Activated CD4-positive, alpha-beta T cell treated with anti-CD3 and anti-CD28 coated beads, Interleukin-2, amount 10 ng/mL, durations not matched to agents 24 days and 14 days (primary cell): ENCODE measurements at regions of chr6 and their contacts with region 1.

Region 1: DNA sequence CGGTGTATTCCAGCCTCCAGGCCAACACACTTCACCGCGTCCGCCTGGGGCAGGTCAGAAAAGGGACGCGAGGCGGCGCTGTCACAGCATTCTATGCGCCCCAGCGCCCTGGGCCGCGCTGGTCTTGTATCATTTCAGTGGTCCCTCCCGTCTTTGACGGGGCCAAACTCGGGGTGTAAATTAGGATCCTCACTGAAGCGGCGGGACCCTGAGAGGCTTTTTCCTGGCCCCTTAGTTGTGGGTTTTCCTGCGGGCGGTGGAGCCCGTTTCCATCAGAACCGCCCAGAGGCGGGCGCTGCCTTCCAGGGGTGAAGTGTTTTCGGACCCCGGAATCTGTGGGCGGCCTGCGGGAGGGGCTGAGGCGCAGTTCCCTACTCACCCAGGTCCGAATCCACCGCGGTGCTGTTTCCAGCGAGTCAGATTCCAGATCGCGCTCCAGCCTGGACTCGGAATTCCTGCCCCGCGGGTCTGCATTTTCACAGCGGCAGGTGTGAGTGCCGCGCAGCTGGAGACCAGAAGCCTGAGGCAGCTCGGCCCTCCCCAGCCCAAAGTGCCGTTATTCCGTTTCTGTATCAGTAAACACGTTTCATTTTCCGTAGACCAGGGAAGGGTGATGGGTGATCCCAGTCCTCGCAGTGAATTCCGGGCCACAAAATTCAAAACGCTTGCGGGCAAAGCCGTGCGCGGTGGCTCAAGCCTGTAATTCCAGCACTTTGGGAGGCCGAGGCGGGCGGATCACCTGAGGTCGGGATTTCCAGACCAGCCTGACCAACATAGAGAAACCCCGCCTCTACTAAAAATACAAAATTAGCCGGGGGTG is 3.9 kb upstream of the MICB start:
- DNase-seq: peak; percentile 93
- H3K4me3 Mint-ChIP-seq: peak overlapping the region; percentile 93
- H3K27ac Mint-ChIP-seq: peak overlapping the region; percentile 97
- H3K4me1 Mint-ChIP-seq: peaks cover 39% of the 10 kb centered on the region
- H3K27me3 Mint-ChIP-seq: no peaks in the 10 kb centered on the region

Region 2: DNA sequence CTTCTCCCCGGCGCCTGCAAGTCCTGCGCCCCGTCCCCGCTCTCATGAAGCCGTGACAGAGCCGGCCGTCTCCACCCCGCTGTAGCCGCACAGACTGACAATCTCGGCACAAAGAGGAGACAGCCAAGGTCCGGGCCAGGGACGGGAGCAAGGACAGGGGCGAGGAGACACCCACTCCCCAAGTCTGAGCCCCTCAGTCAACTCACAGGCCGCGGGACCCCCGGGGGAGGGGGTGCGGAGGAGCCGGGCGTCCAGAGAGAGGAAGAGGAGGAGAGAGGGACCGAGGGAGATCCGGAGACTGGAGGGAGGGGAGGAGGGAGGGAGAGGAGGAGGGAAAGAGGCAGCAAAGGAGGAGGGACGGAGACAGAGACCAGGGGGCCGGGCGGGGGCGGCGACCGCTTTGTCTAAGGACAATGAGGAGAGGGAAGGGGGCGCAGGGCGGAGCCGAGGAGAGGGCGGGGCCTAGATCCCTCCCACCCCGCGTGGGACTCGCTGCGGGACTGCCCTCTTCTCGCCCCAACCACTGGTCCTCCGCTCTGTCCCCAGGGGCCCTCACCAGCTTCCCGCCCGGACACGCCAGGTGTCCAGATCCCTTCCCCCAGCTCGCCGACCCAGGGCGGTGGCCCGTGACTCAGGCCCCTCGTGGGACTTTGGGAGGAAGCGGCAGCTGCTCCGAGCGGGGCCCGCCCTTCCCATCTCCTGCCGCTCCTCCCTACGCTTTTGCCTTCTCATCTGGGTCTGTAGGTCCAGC is 807.0 kb before region 1 on chr6:
- intact Hi-C with region 1: loop called (anchors 10 kb)
- DNase-seq: peak; percentile 96
- H3K4me3 Mint-ChIP-seq: peak overlapping the region; percentile 94
- H3K27ac Mint-ChIP-seq: peak overlapping the region; percentile 93
- H3K4me1 Mint-ChIP-seq: peaks cover 53% of the 10 kb centered on the region
- H3K27me3 Mint-ChIP-seq: no peaks in the 10 kb centered on the region

Region 3: GRCh38 chr6:31403283-31403989 is 90.6 kb before region 1 on chr6 and contains the start of gene MICA:
- intact Hi-C with region 1: loop called (anchors 5 kb)
- DNase-seq: peak; percentile 93
- H3K4me3 Mint-ChIP-seq: peak within 1 kb of the TSS; percentile 86
- H3K27ac Mint-ChIP-seq: peak within 1 kb of the TSS; percentile 69
- H3K4me1 Mint-ChIP-seq: peaks cover 59% of the 10 kb centered on the region
- H3K27me3 Mint-ChIP-seq: peaks cover 2% of the 10 kb centered on the region
- total RNA-seq, gene MICA: 6.5 and 7.3 TPM in 2 replicates

Region 4: DNA sequence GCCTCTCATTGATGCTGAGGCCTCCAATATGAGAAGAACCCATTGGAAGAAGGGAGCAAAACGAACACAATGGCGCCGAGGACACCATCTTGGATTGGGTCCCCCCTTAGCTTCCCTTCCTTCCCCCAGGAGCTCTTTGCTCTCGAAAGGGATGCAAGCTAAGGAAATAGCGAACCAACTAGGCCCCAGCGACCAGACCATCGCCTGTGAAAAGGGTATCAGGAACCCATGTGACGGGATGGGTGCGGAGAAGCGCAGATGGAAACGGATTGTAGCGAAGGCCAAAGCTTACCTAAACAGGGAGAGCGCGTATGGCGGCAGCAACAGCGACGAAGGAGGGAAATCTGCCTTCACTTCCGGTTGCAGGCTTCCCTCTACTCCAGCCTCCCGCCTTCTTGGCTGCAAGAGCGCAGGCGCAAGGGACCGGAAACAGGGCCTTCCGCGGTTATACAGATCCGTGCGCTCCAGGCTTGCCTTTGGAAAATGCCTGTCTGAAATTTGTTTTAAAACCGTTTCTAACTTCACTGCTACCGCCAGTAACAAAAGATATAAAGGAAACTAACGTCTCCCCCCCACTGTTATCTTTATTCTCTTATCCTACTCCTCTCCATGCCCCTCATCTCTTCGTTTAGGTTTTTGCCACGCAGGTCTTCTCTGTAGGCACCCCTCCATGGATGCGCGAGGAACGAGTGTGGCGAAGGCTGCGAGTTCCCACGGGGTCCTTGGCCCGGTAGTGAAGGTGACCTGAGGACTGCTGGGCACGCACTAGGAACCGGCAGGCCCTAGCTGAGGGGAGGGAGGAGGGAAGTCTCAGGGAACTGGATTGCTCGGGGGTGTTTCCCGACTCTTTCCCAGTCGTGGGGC is 47.8 kb after region 1 on chr6 and contains the start of gene DDX39B:
- intact Hi-C with region 1: loop called (anchors 1 kb)
- DNase-seq: peak; percentile 98
- H3K4me3 Mint-ChIP-seq: peak within 1 kb of the TSS; percentile 81
- H3K27ac Mint-ChIP-seq: peak within 1 kb of the TSS; percentile 90
- H3K4me1 Mint-ChIP-seq: peaks cover 50% of the 10 kb centered on the region
- H3K27me3 Mint-ChIP-seq: no peaks in the 10 kb centered on the region
- total RNA-seq, gene DDX39B: 696 and 720 TPM in 2 replicates

Region 5: DNA sequence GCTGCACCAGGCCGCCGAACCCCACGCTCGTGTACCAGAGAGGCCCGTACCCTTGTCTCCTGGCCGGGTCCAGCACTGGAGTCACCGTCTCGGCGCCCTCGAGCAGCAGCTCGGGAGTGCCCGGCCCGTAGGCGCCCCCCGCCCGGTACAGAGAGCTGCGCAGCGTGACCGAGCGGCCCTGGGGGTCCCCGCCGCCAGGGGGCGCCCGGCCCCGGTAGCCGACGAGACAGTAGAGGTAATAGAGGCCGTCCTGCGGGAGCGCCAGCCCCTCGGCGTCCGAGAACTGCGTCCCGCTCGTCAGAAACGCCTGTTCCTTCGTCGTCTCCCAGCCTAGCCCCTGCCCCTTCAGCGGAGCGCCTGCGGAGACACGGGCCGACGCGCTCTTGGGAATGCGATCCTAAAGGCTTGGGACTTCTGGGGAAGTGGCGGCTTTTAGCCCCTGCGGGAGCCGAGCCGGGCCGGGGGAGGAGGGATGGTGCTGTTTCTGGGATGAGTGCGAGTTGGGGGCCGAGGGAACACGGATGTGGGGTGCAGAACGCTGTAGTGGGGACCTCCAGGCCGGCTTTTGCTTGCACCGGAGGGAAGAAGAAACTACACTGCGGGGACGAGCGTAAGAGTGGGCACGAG is 86.8 kb after region 1 on chr6:
- intact Hi-C with region 1: loop called (anchors 5 kb)
- DNase-seq: peak; percentile 96
- H3K4me3 Mint-ChIP-seq: peak overlapping the region; percentile 94
- H3K27ac Mint-ChIP-seq: peak overlapping the region; percentile 91
- H3K4me1 Mint-ChIP-seq: peaks cover 62% of the 10 kb centered on the region
- H3K27me3 Mint-ChIP-seq: no peaks in the 10 kb centered on the region

Region 6: GRCh38 chr6:31597006-31597405 is 102.9 kb after region 1 on chr6:
- intact Hi-C with region 1: loop called (anchors 1 kb)
- DNase-seq: peak; percentile 84
- H3K4me3 Mint-ChIP-seq: no peak overlapping the region
- H3K27ac Mint-ChIP-seq: no peak overlapping the region
- H3K4me1 Mint-ChIP-seq: peaks cover 41% of the 10 kb centered on the region
- H3K27me3 Mint-ChIP-seq: no peaks in the 10 kb centered on the region

Region 7: DNA sequence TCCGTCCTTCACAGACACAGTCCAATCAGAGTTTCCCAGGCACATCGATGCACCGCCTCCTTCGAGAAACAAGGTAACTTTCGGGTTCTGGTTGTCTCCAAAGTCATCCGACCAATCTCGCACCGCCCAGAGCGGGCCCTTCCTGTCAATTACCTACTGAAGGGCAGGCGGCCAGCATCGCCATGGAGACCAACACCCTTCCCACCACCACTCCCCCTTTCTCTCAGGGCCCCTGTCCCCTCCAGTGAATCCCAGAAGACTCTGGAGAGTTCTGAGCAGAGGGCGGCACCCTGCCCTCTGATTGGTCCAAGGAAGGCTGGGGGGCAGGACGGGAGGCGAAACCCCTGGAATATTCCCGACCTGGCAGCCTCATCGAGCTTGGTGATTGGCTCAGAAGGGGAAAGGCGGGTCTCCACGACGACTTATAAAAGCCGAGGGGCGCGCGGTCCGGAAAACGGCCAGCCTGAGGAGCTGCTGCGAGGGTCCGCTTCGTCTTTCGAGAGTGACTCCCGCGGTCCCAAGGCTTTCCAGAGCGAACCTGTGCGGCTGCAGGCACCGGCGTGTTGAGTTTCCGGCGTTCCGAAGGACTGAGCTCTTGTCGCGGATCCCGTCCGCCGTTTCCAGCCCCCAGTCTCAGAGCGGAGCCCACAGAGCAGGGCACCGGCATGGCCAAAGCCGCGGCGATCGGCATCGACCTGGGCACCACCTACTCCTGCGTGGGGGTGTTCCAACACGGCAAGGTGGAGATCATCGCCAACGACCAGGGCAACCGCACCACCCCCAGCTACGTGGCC is 333.4 kb after region 1 on chr6 and contains the start of gene HSPA1B:
- intact Hi-C with region 1: loop called (anchors 10 kb)
- DNase-seq: peak; percentile 98
- H3K4me3 Mint-ChIP-seq: peak within 1 kb of the TSS; percentile 87
- H3K27ac Mint-ChIP-seq: peak within 1 kb of the TSS; percentile 93
- H3K4me1 Mint-ChIP-seq: peaks cover 37% of the 10 kb centered on the region
- H3K27me3 Mint-ChIP-seq: no peaks in the 10 kb centered on the region
- total RNA-seq, gene HSPA1B: 156 and 161 TPM in 2 replicates